KBM-7 (cell line): ENCODE measurements at regions of chr14 and their contacts with region 1.

Region 1: DNA sequence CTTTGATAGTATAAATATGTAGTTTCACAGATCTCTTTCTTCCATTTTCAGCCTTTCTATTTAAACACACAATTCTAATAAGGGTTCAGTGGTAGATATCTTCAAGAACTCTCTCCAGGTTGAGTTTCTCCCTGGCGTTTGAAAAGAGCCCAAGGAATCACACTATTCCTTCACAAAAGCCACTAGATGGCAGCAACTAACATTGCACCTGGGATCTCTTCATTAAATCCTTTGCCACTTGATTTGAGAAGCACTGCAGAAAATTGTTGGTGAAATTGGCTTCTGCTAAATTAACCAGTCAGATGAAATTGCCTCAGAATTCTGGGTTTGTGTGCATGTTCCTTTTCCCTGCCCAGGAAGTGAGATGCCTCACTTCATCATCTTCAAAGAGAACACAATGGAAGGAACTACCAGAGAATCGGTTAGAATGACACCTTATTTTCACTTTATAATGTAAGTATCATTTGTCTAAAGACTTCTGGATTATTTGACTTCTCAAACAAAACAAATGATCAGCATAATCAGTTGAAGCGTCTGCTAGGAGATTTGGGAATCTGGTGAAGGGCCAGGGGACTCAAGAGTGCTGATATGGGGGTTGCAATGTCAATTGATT is 6.8 kb downstream of the CCDC198 start:
- DNase-seq: peak; percentile 38

Region 2: GRCh38 chr14:58072288-58073071 is 585.6 kb after region 1 on chr14:
- in situ Hi-C with region 1: loop called (anchors 25 kb)
- DNase-seq: peak; percentile 73